Adrenal gland (tissue), 19 donors: ENCODE measurements at regions of chr3 and their contacts with region 1.

Region 1: GRCh38 chr3:183489455-183490210 is 61.2 kb upstream of the MCF2L2 start:
- DNase-seq: peak in 1 of 7 donors; percentile 5
- H3K4me3 ChIP-seq: no peak overlapping the region
- H3K27ac ChIP-seq: no peak overlapping the region
- H3K4me1 ChIP-seq: no peaks in the 10 kb centered on the region
- H3K27me3 ChIP-seq: no peaks in the 10 kb centered on the region
- CTCF ChIP-seq: no peak
- POLR2A ChIP-seq: no peak

Region 2: DNA sequence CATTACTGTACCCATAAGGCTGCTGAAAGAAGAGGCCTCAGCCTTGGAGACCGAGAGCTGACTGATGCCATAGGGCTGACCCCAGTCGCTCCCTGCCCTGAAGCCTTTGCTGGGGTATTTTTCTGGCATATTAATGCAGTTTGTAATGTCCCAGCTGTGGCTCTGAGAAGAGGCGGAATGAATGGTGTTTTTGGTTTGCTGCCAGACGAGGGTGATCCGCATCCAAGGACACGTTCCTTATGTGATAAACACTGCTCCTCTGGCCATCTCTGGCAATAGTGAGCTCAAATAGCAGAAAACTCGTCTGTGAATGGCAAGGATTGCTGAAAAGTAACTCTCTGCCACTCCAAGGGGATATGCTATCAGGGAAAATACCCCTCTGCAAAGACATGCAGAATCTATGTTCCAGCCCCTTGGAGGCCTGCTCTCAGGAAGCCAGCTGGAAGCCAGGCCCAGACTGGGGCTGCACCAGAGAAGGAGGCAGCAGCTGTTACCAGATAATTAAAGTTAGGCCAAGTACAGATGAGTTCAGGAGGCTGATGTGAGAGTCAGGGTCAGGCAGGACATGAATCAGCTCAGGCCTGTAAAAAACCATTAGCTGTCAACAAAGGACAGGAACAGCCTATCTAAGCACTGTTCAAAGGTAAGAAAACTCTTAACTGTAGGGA is 94.7 kb after region 1 on chr3:
- intact Hi-C with region 1: loop called in 1 of 2 experiments (anchors 10 kb)
- DNase-seq: peak; percentile 55 to 91 (median 83)
- H3K4me3 ChIP-seq: no peak overlapping the region
- H3K27ac ChIP-seq: peak overlapping the region; percentile 10 to 81 (median 65)
- H3K4me1 ChIP-seq: peaks cover 25 to 43% of the 10 kb centered on the region in 2 donors
- H3K27me3 ChIP-seq: no peaks in the 10 kb centered on the region
- CTCF ChIP-seq: no peak
- POLR2A ChIP-seq: no peak